HepG2 (cell line): ENCODE measurements at regions of chr9 and their contacts with region 1.

Region 1: DNA sequence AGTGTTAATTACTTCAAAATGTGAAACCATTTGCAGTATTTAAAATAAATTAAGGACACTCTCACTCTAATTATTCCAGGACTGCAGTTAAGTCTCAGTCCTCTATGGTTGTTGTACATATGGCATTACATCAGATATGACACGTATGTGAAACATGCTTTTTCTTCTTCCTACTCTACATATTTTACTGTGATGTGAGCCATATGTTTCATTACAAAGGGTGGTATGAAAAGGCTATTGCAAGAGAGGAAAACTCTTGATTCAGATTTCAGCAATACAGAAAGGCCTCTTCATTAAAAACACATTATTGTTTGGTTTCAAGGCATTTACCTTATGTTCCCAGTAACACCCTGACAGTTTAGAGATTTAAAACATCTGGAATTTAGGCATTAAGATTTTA is 964.5 kb upstream of the DMAC1 start:
- DNase-seq: no peak
- ATAC-seq: no peak
- H3K4me3 ChIP-seq: no peak overlapping the region
- H3K27ac ChIP-seq: no peak overlapping the region
- H3K4me1 ChIP-seq: no peaks in the 10 kb centered on the region
- H3K27me3 ChIP-seq: no peaks in the 10 kb centered on the region
- CTCF ChIP-seq: no peak
- EP300 ChIP-seq: no peak
- POLR2A ChIP-seq: no peak
- RAD21 ChIP-seq: no peak

Region 2: GRCh38 chr9:8784838-8785237 is 20.8 kb after region 1 on chr9:
- CTCF ChIA-PET with region 1: no interaction called
- POLR2A ChIA-PET with region 1: no interaction called
- in situ Hi-C with region 1: no loop called
- intact Hi-C with region 1: no loop called
- DNase-seq: no peak
- ATAC-seq: no peak
- H3K4me3 ChIP-seq: no peak overlapping the region
- H3K27ac ChIP-seq: no peak overlapping the region
- H3K4me1 ChIP-seq: no peaks in the 10 kb centered on the region
- H3K27me3 ChIP-seq: no peaks in the 10 kb centered on the region
- CTCF ChIP-seq: no peak
- EP300 ChIP-seq: no peak
- POLR2A ChIP-seq: no peak
- RAD21 ChIP-seq: no peak

Region 3: GRCh38 chr9:8821910-8822666 is 58.0 kb after region 1 on chr9:
- CTCF ChIA-PET with region 1: no interaction called
- POLR2A ChIA-PET with region 1: no interaction called
- in situ Hi-C with region 1: no loop called
- intact Hi-C with region 1: loop called (anchors 10 kb)
- DNase-seq: no peak
- ATAC-seq: no peak
- H3K4me3 ChIP-seq: no peak overlapping the region
- H3K27ac ChIP-seq: no peak overlapping the region
- H3K4me1 ChIP-seq: peaks cover 14% of the 10 kb centered on the region
- H3K27me3 ChIP-seq: no peaks in the 10 kb centered on the region
- CTCF ChIP-seq: no peak
- EP300 ChIP-seq: no peak
- POLR2A ChIP-seq: no peak
- RAD21 ChIP-seq: no peak